ENCODE measurements at regions of chr3 and their contacts with region 1.

Region 1: DNA sequence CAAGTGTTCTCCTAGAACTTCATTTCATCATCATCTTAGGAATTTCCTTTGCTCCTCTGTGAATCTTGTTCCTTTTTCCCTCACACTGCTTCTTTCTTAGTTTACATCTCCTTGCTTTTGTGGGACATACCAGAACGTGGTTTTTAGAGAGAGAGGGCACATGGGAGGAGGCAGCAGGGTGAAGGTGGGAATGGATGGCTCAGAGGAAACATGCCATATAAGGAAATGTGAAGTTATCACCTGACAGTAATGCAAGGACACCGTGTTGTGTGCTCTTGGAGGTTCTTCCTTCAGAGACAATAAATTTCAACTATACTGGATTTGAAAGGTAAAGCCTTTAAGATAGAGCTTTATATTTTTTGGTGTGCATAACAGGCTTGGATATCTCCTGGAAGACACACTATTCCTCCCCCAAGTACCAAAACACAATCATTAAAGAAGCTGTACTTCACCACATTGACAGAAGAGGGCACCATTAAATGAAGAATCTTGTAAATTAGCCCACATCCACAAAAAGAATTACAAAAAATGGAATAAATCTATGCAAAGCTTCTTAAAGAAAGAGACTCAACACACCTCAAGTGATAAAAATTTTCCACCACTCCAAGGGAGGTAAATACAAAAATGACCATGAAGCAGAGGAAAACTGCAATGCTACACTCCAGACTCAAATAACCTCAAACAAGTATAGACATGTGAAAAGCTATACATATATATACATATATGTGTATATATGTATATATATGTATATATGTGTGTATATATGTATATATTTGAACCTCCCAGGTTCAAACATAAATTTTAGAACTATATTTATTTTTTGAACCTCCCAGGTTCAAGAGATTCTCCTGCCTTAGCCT is 26.1 kb downstream of the RPL39L start:
- DNase-seq: peak; percentile 24
- CTCF ChIP-seq: peak; percentile 57

Region 2: GRCh38 chr3:186849374-186849975 is 263.7 kb before region 1 on chr3:
- CTCF ChIA-PET with region 1: interaction called, 10 read pairs
- POLR2A ChIA-PET with region 1: no interaction called
- DNase-seq: peak; percentile 69
- CTCF ChIP-seq: peak; percentile 61

Region 3: DNA sequence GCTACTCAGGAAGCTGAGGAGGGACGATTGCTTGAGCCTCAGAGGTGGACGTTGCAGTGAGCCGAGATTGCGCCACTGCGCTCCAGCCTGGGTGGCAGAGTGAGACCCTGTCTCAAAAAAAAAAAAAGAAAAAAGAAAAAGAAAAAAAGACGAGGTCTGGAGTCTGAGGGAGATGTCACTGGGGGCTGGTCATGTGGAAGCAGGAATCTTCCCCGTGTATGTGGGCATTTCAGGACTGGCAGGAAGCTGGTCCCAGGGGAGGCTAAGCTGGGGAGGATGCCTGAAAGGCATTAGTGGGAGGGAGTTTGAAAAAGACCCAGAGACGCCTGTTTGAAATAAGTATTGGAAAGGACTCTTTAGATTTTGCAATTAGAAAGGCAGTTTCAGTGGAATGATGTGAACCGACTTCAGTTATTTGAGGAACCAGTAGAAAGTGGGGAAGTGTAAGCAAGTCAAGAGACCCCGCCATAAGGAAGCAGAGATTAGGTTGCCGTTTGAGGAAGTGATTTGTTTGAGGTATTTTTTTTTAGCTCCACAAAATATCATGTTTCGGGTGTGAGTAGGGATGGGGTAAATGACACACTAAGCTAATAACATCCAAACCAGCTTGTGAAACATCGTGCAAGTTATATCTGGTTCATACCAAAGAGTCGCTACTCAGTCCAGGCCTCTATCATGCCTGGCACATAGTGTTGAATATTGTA is 127.4 kb before region 1 on chr3:
- CTCF ChIA-PET with region 1: no interaction called
- POLR2A ChIA-PET with region 1: no interaction called
- DNase-seq: peak; percentile 45
- CTCF ChIP-seq: no peak

Region 4: DNA sequence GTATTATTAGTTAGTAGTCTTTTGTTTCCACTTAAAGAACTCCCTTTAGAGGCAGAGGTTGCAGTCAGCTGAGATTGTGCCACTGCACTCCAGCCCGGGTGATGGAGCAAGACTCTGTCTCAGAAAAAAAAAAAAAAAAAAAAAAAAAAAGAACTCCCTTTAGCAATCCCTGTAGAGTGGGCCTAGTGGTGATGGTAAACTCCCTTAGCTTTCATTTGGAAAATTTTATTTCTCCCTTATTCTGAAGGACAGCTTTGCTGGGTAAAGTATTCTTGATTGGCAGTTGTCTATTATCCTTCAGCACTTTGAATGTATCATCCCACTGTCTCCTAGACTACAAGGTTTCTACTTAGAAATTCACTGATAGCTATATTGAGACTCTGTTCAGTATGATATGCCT is 19.8 kb before region 1 on chr3:
- CTCF ChIA-PET with region 1: interaction called, 19 read pairs
- POLR2A ChIA-PET with region 1: no interaction called
- DNase-seq: no peak
- CTCF ChIP-seq: no peak

Region 5: GRCh38 chr3:187101184-187102072 is 11.7 kb before region 1 on chr3:
- CTCF ChIA-PET with region 1: interaction called, 61 read pairs
- POLR2A ChIA-PET with region 1: no interaction called
- DNase-seq: no peak
- CTCF ChIP-seq: no peak

Region 6: GRCh38 chr3:187130346-187131066 is 17.3 kb after region 1 on chr3:
- CTCF ChIA-PET with region 1: interaction called, 78 read pairs
- POLR2A ChIA-PET with region 1: interaction called, 3 read pairs
- DNase-seq: peak; percentile 40
- CTCF ChIP-seq: no peak

Region 7: DNA sequence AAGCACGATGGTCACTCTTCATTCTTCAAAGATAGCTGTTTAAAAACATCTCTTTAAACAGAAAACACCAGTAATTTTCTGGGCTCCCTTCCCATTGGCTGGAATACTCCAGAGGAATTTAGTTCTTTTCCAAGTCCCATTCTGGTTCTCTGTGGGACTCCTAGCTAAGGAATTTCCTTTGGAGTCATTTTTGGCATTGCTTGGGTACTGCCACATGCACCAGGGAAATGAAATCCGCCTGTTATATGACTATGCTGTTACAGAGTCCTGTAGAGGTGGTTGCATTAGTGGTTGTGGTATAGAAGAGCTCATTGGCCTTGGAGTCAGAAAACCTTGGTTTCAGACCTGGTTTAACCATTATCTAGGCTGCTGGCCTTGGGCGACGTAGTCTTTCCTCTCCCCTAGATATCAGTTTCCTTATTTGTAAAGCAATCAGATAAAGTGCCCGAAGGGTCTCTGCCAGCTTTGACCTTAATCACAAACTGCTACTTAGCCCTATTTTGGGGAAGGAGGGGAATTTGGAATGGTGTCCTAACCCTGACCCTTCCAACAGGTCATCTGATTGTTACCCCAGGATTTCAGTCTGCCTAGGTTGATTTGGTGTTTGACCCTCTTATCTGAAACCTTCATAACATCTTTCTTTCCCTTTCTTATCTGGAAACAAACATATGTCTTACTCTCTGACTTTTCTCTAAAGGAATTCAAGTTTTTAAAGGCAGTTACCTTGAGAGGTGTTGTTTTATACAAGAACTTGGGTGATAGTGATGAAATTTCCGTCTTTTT is 97.6 kb after region 1 on chr3:
- CTCF ChIA-PET with region 1: no interaction called
- POLR2A ChIA-PET with region 1: no interaction called
- DNase-seq: no peak
- CTCF ChIP-seq: no peak